Activated CD4-positive, alpha-beta memory T cell treated with anti-CD3 and anti-CD28 coated beads for 36 hours (primary cell): ENCODE measurements at regions of chr3 and their contacts with region 1.

Region 1: DNA sequence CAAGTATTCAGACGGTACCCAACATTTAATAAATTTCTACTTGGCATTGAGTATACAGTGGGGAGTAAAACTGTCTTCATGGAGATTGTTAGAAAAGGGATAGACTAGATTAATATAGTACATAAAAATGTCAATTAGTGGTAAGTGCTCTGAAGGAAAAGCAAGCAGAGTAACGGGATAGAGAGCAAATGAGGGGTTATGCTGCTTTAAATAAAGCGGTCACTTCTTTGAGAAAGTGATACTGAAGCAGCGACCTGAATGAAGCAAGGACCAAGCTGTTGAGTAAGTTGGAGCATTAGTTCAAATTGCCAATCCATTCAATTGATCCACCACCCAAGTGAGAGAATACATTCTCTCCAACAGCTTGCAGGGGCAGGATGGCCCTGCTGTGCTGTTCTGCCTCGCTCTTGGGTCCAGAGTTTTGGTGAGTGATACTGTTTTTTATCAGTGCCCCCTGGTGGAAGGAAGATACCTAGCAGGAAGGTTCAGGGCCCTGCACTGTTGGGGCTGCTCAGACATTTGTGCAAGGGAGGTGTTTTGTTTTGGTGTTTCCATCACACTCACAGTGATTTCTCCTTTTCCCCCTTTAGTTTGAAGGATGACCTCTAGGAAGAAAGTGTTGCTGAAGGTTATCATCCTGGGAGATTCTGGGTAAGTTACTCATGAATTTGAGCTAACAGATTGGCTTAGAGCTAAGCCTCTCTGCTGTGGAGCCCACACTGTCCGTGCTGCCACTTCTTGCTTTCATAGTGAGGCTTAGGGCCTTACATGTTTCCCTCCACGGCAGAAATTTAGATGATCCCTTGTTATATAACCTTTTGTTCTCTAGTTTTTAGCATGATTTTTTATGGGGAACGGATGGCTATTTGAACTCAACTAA is 69.0 kb downstream of the RAB7A start:
- DNase-seq: peak; percentile 72
- H3K4me3 Mint-ChIP-seq: peak overlapping the region; percentile 36
- H3K27ac Mint-ChIP-seq: peak overlapping the region; percentile 93
- H3K4me1 Mint-ChIP-seq: peaks cover 86% of the 10 kb centered on the region
- H3K27me3 Mint-ChIP-seq: no peaks in the 10 kb centered on the region

Region 2: GRCh38 chr3:128725932-128726690 is 68.9 kb before region 1 on chr3 and contains the start of gene RAB7A:
- CTCF ChIA-PET with region 1: interaction called, 13 read pairs
- POLR2A ChIA-PET with region 1: interaction called, 17 read pairs
- intact Hi-C with region 1: loop called (anchors 1 kb)
- DNase-seq: peak; percentile 99
- H3K4me3 Mint-ChIP-seq: peak within 1 kb of the TSS; percentile 93
- H3K27ac Mint-ChIP-seq: peak within 1 kb of the TSS; percentile 87
- H3K4me1 Mint-ChIP-seq: peaks cover 50% of the 10 kb centered on the region
- H3K27me3 Mint-ChIP-seq: no peaks in the 10 kb centered on the region
- total RNA-seq, gene RAB7A: 264 to 272 TPM

Region 3: DNA sequence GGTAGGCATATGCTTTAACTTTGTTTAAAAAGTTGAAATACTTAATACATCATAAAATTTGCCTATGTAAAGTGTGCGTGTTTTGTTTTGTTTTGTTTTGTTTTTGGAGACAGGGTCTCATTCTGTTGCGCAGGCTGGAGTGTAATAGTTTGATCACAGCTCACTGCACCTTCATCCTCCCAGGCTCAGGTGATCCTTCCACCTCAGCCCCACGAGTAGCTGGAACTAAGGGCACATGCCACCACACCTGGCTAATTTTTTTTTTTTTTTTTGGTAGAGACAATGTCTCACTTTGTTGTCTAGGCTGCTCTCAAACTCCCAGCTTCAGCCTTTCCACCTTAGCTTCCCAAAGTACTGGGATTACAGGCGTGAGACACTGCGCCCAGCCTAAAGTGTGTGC is 26.5 kb before region 1 on chr3:
- CTCF ChIA-PET with region 1: interaction called, 13 read pairs
- POLR2A ChIA-PET with region 1: no interaction called
- intact Hi-C with region 1: no loop called
- DNase-seq: no peak
- H3K4me3 Mint-ChIP-seq: no peak overlapping the region
- H3K27ac Mint-ChIP-seq: no peak overlapping the region
- H3K4me1 Mint-ChIP-seq: peaks cover 68% of the 10 kb centered on the region
- H3K27me3 Mint-ChIP-seq: no peaks in the 10 kb centered on the region

Region 4: DNA sequence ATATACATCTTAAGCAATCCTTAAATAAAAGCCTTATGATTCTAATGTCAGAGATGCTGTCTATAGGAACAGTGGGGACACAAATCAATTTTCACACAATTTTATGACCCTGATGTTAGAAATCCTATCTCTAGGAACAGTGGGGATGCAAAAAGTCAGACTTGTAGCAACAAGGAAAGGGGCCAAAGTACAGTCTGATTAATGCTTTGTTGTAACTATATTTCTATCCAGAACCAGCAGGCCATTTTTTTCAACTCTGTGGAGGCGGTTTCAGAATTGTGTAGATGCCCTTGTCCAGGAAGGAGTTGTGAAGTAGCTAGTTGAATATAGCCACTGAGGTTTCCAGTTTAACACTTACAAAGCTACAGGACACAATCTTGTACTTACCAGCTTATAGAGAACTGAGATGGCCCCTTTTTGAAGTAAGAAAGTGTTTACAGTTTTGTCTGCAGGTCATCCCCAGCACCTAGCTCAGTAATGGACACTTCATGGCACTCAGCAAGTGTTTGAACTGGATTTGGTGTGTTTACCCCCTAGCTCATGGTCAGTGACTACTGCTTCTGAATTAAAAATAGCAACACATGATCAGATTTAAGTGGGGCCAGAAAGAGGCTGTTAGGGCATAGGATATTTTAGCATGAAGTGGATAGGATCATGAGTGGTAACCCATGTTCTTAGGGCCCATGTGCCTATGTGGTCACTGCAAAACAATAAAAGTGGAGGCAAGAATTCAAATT is 14.7 kb before region 1 on chr3:
- CTCF ChIA-PET with region 1: interaction called, 90 read pairs
- POLR2A ChIA-PET with region 1: interaction called, 3 read pairs
- intact Hi-C with region 1: no loop called
- DNase-seq: no peak
- H3K4me3 Mint-ChIP-seq: no peak overlapping the region
- H3K27ac Mint-ChIP-seq: peak overlapping the region; percentile 60
- H3K4me1 Mint-ChIP-seq: peaks cover 90% of the 10 kb centered on the region
- H3K27me3 Mint-ChIP-seq: no peaks in the 10 kb centered on the region

Region 5: GRCh38 chr3:128845778-128846485 is 50.9 kb after region 1 on chr3:
- CTCF ChIA-PET with region 1: interaction called, 13 read pairs
- POLR2A ChIA-PET with region 1: no interaction called
- intact Hi-C with region 1: loop called (anchors 5 kb)
- DNase-seq: peak; percentile 92
- H3K4me3 Mint-ChIP-seq: peak overlapping the region; percentile 45
- H3K27ac Mint-ChIP-seq: peak overlapping the region; percentile 84
- H3K4me1 Mint-ChIP-seq: peaks cover 18% of the 10 kb centered on the region
- H3K27me3 Mint-ChIP-seq: no peaks in the 10 kb centered on the region

Region 6: GRCh38 chr3:129087138-129087702 is 292.2 kb after region 1 on chr3:
- CTCF ChIA-PET with region 1: no interaction called
- POLR2A ChIA-PET with region 1: no interaction called
- intact Hi-C with region 1: no loop called
- DNase-seq: no peak
- H3K4me3 Mint-ChIP-seq: no peak overlapping the region
- H3K27ac Mint-ChIP-seq: no peak overlapping the region
- H3K4me1 Mint-ChIP-seq: no peaks in the 10 kb centered on the region
- H3K27me3 Mint-ChIP-seq: no peaks in the 10 kb centered on the region